ENCODE measurements at regions of chr5 and their contacts with region 1.

Region 1: GRCh38 chr5:146426853-146427618 is 20.1 kb upstream of the TCERG1 start:
- DNase-seq: peak; percentile 52
- ATAC-seq: peak; percentile 88
- H3K4me3 ChIP-seq: no peak overlapping the region
- H3K27ac ChIP-seq: no peak overlapping the region
- H3K4me1 ChIP-seq: no peaks in the 10 kb centered on the region
- H3K27me3 ChIP-seq: peaks cover 16% of the 10 kb centered on the region
- CTCF ChIP-seq: peak; percentile 73
- POLR2A ChIP-seq: no peak
- RAD21 ChIP-seq: peak; percentile 87

Region 2: DNA sequence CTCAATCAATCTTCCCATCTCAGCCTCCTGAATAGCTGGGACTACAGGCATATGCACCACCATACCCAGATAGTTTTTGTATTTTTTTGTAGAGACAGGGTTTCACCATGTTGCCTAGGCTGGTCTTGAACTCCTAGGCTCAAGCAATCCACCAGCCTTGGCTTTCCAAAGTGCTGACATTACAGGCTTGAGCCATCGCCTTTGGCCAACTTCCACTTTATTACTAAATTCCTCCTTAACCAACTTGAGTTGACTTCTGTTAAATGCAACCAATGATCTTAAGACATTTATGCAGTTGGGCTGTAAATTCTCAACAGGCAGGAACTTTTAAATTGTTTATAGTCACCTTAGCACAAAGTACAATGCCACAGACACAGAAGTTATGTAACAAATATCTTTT is 247.3 kb before region 1 on chr5:
- CTCF ChIA-PET with region 1: no interaction called
- POLR2A ChIA-PET with region 1: no interaction called
- dilution Hi-C with region 1: no loop called
- in situ Hi-C with region 1: no loop called
- intact Hi-C with region 1: loop called (anchors 5 kb)
- DNase-seq: no peak
- ATAC-seq: no peak
- H3K4me3 ChIP-seq: no peak overlapping the region
- H3K27ac ChIP-seq: no peak overlapping the region
- H3K4me1 ChIP-seq: no peaks in the 10 kb centered on the region
- H3K27me3 ChIP-seq: no peaks in the 10 kb centered on the region
- CTCF ChIP-seq: no peak
- POLR2A ChIP-seq: no peak
- RAD21 ChIP-seq: no peak

Region 3: GRCh38 chr5:146291421-146292074 is 135.5 kb before region 1 on chr5:
- CTCF ChIA-PET with region 1: no interaction called
- POLR2A ChIA-PET with region 1: no interaction called
- dilution Hi-C with region 1: no loop called
- in situ Hi-C with region 1: no loop called
- intact Hi-C with region 1: loop called (anchors 1 kb)
- DNase-seq: peak; percentile 33
- ATAC-seq: peak; percentile 49; the same call in 1 of the 2 replicates
- H3K4me3 ChIP-seq: no peak overlapping the region
- H3K27ac ChIP-seq: no peak overlapping the region
- H3K4me1 ChIP-seq: no peaks in the 10 kb centered on the region
- H3K27me3 ChIP-seq: no peaks in the 10 kb centered on the region
- CTCF ChIP-seq: peak; percentile 60
- POLR2A ChIP-seq: no peak
- RAD21 ChIP-seq: peak; percentile 40